ENCODE measurements at regions of chr10 and their contacts with region 1.

Region 1: GRCh38 chr10:120948889-120949608 is 97.9 kb downstream of the WDR11 start:
- DNase-seq: no peak

Region 2: GRCh38 chr10:121608469-121609190 is 659.6 kb after region 1 on chr10:
- intact Hi-C with region 1: loop called (anchors 5 kb)
- DNase-seq: peak; percentile 73

Measured in cardiac septum (tissue), 1 donor.